Caco-2 (cell line): ENCODE measurements at regions of chr14 and their contacts with region 1.

Region 1: DNA sequence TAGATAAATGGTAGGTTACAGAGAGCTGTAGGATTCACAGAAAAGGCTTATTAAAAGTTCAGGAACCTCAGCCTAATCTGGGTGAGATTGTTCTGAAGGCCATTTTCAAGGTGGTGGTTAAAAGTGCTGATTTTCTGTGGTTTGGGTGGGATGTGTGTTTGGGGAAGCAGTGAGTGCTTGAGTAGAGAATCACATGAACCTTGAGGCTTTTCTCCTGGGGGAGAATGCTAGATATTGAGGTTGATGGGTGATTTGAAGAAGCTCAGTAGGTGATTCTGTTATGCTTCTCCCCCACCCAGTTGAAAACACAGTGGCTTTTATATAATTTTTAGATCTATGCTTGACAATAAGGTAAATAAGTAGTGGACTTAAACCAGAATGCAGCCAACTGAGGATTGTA is 420.9 kb downstream of the PCNX1 start:
- DNase-seq: no peak
- H3K4me3 ChIP-seq: no peak overlapping the region
- H3K4me3 Mint-ChIP-seq: no peak overlapping the region
- H3K27ac Mint-ChIP-seq: no peak overlapping the region
- H3K4me1 ChIP-seq: peaks cover 11% of the 10 kb centered on the region; the same call in 1 of the 2 replicates
- H3K4me1 Mint-ChIP-seq: peaks cover 19% of the 10 kb centered on the region
- H3K27me3 ChIP-seq: no peaks in the 10 kb centered on the region
- H3K27me3 Mint-ChIP-seq: no peaks in the 10 kb centered on the region
- CTCF ChIP-seq: no peak

Region 2: DNA sequence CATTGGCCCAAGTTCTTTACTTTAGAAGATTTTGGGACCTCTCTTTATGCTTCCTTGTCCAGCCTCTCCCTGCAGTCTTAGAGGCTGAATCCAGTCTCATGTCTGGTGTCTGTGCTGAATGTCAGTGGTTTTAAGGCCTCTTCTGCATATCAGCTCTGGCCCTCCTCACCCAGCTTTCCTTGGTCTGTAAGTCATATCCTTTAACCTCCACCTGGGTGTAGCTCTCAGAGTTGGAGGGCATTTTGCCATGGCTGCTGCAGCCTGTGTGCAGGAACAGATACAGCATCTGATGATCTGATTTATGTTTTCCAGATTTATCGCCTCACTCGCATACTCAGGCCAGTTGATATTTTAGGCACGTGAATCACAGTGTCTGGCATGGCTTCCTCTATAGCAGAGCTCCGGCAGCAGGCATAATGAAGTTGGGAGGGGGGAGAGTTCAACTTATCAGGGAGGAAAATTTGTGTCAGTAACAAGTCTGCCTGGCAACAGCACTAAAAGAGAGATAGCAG is 85.9 kb before region 1 on chr14:
- CTCF ChIA-PET with region 1: no interaction called
- POLR2A ChIA-PET with region 1: no interaction called
- intact Hi-C with region 1: no loop called
- DNase-seq: no peak
- H3K4me3 ChIP-seq: no peak overlapping the region
- H3K4me3 Mint-ChIP-seq: no peak overlapping the region
- H3K27ac Mint-ChIP-seq: no peak overlapping the region
- H3K4me1 ChIP-seq: peaks cover 12% of the 10 kb centered on the region
- H3K4me1 Mint-ChIP-seq: peaks cover 10% of the 10 kb centered on the region
- H3K27me3 ChIP-seq: no peaks in the 10 kb centered on the region
- H3K27me3 Mint-ChIP-seq: no peaks in the 10 kb centered on the region
- CTCF ChIP-seq: no peak

Region 3: GRCh38 chr14:71267691-71268090 is 60.5 kb before region 1 on chr14:
- CTCF ChIA-PET with region 1: no interaction called
- POLR2A ChIA-PET with region 1: no interaction called
- intact Hi-C with region 1: no loop called
- DNase-seq: no peak
- H3K4me3 ChIP-seq: no peak overlapping the region
- H3K4me3 Mint-ChIP-seq: no peak overlapping the region
- H3K27ac Mint-ChIP-seq: no peak overlapping the region
- H3K4me1 ChIP-seq: no peaks in the 10 kb centered on the region
- H3K4me1 Mint-ChIP-seq: no peaks in the 10 kb centered on the region
- H3K27me3 ChIP-seq: no peaks in the 10 kb centered on the region
- H3K27me3 Mint-ChIP-seq: no peaks in the 10 kb centered on the region
- CTCF ChIP-seq: no peak

Region 4: GRCh38 chr14:71403656-71404055 is 75.5 kb after region 1 on chr14:
- CTCF ChIA-PET with region 1: interaction called, 15 read pairs
- POLR2A ChIA-PET with region 1: no interaction called
- intact Hi-C with region 1: no loop called
- DNase-seq: peak; percentile 39 to 47
- H3K4me3 ChIP-seq: no peak overlapping the region
- H3K4me3 Mint-ChIP-seq: no peak overlapping the region
- H3K27ac Mint-ChIP-seq: no peak overlapping the region
- H3K4me1 ChIP-seq: peaks cover 11% of the 10 kb centered on the region; the same call in 1 of the 2 replicates
- H3K4me1 Mint-ChIP-seq: peaks cover 10% of the 10 kb centered on the region
- H3K27me3 ChIP-seq: no peaks in the 10 kb centered on the region
- H3K27me3 Mint-ChIP-seq: no peaks in the 10 kb centered on the region
- CTCF ChIP-seq: peak; percentile 23 to 46